Panc1 (cell line): ENCODE measurements at regions of chr16 and their contacts with region 1.

Region 1: DNA sequence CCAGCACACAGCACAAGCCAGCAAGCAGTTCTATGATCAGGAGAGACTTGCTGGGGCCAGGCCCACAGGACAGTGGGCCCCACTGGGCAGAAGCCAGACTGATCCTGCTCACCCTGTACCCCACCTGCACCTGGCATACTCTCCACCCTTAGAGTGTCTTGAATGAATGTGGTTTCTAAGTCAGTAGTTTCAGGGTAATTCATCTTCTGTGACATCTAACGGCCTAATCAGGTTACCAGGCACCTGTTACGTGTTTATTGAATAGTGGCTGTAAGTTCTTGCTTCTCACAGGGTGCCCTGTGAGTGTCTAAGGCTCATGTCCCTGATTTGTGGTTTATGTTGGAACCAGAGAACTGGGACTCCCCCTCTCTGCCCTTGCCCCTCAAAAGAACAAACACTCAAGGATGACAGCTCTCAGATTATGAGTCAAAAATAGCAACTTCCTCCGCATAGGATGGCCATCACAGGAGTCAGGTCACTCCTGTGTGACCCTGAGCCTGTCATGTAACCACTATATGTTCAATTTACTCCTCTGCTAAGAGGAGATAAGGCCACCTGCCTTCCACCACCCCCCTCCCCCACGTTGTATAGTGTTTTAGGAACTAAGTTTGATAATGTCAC is 7.0 kb upstream of the OR2C1 start:
- DNase-seq: no peak
- ATAC-seq: no peak
- H3K4me3 ChIP-seq: no peak overlapping the region
- H3K27ac ChIP-seq: no peak overlapping the region
- H3K4me1 ChIP-seq: no peaks in the 10 kb centered on the region
- H3K27me3 ChIP-seq: no peaks in the 10 kb centered on the region
- CTCF ChIP-seq: no peak

Region 2: GRCh38 chr16:3112058-3112880 is 236.4 kb before region 1 on chr16 and contains the start of gene ZNF205:
- CTCF ChIA-PET with region 1: no interaction called
- POLR2A ChIA-PET with region 1: interaction called, 11 read pairs
- in situ Hi-C with region 1: no loop called
- intact Hi-C with region 1: no loop called
- DNase-seq: no peak
- ATAC-seq: peak; percentile 93
- H3K4me3 ChIP-seq: peak within 1 kb of the TSS; percentile 89 to 94
- H3K27ac ChIP-seq: peak within 1 kb of the TSS; percentile 88
- H3K4me1 ChIP-seq: peaks cover 16% of the 10 kb centered on the region
- H3K27me3 ChIP-seq: no peaks in the 10 kb centered on the region
- CTCF ChIP-seq: no peak
- total RNA-seq, gene ZNF205: 18.3 TPM

Region 3: DNA sequence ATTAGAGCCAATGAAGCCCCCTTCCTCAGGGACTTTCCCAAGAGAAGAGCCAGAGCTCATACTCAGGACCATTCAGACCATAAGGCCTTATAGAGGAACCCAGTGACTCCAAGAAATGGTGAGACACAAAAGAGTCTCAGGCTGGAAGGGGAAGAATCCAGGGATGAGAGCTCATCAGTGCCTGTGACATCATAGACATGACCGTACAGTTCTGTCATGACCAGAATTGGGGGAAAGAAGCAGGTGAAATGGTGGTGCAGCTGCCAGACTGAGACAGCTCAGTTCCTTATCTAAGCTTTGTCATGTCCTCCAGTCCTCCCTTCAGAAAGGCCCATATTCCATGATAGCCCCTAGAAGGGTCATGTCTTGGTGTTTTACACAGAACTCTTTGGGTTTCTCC is 25.7 kb after region 1 on chr16:
- CTCF ChIA-PET with region 1: interaction called, 10 read pairs
- POLR2A ChIA-PET with region 1: no interaction called
- in situ Hi-C with region 1: no loop called
- intact Hi-C with region 1: no loop called
- DNase-seq: no peak
- ATAC-seq: no peak
- H3K4me3 ChIP-seq: no peak overlapping the region
- H3K27ac ChIP-seq: no peak overlapping the region
- H3K4me1 ChIP-seq: no peaks in the 10 kb centered on the region
- H3K27me3 ChIP-seq: no peaks in the 10 kb centered on the region
- CTCF ChIP-seq: no peak